ENCODE measurements at regions of chr17 and their contacts with region 1.

Region 1: GRCh38 chr17:42200702-42201101 is 6.4 kb upstream of the GHDC start:
- DNase-seq: no peak
- ATAC-seq: no peak
- H3K4me3 Mint-ChIP-seq: no peak overlapping the region
- H3K27ac Mint-ChIP-seq: no peak overlapping the region
- H3K4me1 Mint-ChIP-seq: no peaks in the 10 kb centered on the region
- H3K27me3 Mint-ChIP-seq: no peaks in the 10 kb centered on the region

Region 2: DNA sequence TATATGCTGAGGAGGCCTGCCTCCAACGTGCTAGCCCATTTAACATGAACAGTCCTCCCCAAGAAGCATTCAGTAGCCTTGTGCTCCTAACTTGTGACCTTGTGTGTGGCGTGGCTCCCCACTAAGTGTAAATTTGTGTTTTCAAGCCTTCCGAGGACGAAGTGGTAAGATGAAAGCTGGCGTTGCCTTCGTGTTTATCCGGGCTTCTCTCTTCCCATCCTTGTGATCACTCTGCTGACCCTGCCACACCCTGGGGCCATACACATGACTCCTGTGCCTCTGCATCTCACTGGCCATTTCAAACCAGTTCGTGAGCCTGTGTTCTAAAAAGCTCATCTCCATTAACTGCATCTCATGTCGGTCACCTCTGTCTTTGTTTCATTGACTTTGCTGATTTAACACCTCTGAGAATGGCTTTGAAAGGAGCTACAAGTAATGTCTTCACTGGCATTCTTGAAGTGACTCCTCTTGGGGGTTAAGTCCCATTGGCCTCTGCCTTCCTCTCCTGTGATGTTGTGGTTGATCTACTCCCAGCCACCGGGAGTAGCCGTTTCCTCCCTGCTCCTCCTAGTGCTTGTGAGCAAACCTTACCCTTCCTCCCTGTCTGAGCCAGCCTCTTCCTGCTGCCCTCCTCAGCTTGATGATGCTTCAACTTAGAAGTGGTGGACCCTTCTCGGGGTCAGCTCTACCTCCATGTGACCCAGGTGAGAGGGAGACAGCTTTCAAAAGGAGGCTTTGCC is 307.9 kb after region 1 on chr17:
- CTCF ChIA-PET with region 1: no interaction called
- POLR2A ChIA-PET with region 1: no interaction called
- intact Hi-C with region 1: loop called in 1 of 2 experiments (anchors 10 kb)
- DNase-seq: no peak
- ATAC-seq: no peak
- H3K4me3 Mint-ChIP-seq: no peak overlapping the region
- H3K27ac Mint-ChIP-seq: no peak overlapping the region
- H3K4me1 Mint-ChIP-seq: no peaks in the 10 kb centered on the region
- H3K27me3 Mint-ChIP-seq: no peaks in the 10 kb centered on the region

Measured in activated CD4-positive, alpha-beta T cell treated with anti-CD3 and anti-CD28 coated beads for 36 hours (primary cell).